Vagina (tissue), 2 donors: ENCODE measurements at regions of chr1 and their contacts with region 1.

Region 1: DNA sequence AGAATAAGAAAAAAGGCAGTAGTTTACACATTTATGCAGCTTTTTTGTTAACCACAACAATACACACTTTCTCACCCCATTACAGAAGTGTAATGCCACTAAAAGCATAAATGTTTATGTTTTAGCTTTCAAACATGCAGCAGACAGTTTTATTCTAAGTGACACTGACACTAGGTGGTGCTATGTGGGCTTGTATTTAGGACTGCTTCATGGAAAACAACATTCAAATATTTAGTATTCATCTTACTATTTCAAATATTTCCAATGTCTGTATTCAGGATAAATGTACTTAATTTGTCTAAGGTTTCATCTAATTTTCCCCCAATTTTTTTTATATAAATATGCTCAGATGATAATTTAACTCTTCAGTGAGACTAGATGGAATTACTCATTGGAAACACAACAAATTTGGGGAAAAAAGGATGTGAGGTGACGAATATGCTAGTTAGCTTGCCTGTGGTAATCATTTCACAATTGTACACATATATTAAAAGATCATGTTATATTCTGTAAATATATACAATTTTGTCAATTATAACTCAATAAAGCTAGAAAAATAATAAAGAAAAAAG is 71.4 kb downstream of the USP1 start:
- DNase-seq: no peak
- H3K4me3 ChIP-seq: no peak overlapping the region
- H3K27ac ChIP-seq: no peak overlapping the region
- H3K4me1 ChIP-seq: no peaks in the 10 kb centered on the region
- H3K27me3 ChIP-seq: no peaks in the 10 kb centered on the region
- CTCF ChIP-seq: peak in 2 of 3 experiments; percentile 23 to 27
- POLR2A ChIP-seq: no peak

Region 2: GRCh38 chr1:60727552-60727951 is 1780.7 kb before region 1 on chr1:
- intact Hi-C with region 1: no loop called
- DNase-seq: no peak
- H3K4me3 ChIP-seq: no peak overlapping the region
- H3K27ac ChIP-seq: no peak overlapping the region
- H3K4me1 ChIP-seq: no peaks in the 10 kb centered on the region
- H3K27me3 ChIP-seq: no peaks in the 10 kb centered on the region
- CTCF ChIP-seq: no peak
- POLR2A ChIP-seq: no peak

Region 3: DNA sequence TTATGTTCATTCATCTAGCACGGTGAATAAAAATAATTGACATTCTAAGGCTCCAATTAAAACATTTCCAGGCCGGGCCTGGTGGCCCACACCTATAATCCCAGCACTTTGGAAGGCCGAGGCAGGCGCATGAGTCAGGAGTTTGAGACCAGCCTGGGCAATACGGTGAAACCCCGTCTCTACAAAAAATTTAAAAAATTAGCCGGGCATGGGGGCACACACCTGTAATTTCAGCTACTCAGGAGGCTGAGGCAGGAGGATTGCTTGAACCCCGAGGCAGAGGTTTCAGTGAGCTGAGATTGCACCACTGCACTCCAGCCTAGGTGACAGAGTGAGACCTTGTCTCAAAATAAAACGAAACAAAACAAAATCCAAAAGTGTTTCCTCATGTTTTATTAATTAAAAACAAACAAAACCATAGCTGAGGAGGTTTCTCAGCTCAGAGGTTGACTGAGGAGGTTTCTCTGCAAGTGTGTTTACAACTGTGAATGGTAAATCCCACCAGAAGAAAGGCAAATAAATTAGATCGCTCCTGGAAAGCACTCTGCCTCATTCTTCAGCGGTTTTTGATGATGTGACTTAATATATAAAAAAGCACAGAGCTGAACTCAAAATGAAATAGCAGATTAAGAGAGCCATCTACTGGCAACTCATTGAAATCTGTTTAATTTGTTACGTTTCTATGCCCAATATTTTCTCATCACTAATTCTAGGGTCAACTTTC is 238.0 kb after region 1 on chr1:
- intact Hi-C with region 1: loop called (anchors 10 kb)
- DNase-seq: no peak
- H3K4me3 ChIP-seq: no peak overlapping the region
- H3K27ac ChIP-seq: no peak overlapping the region
- H3K4me1 ChIP-seq: peaks cover 5% of the 10 kb centered on the region
- H3K27me3 ChIP-seq: no peaks in the 10 kb centered on the region
- CTCF ChIP-seq: peak in 2 of 3 experiments; percentile 54 to 61
- POLR2A ChIP-seq: no peak